ENCODE measurements at regions of chr4 and their contacts with region 1.

Region 1: DNA sequence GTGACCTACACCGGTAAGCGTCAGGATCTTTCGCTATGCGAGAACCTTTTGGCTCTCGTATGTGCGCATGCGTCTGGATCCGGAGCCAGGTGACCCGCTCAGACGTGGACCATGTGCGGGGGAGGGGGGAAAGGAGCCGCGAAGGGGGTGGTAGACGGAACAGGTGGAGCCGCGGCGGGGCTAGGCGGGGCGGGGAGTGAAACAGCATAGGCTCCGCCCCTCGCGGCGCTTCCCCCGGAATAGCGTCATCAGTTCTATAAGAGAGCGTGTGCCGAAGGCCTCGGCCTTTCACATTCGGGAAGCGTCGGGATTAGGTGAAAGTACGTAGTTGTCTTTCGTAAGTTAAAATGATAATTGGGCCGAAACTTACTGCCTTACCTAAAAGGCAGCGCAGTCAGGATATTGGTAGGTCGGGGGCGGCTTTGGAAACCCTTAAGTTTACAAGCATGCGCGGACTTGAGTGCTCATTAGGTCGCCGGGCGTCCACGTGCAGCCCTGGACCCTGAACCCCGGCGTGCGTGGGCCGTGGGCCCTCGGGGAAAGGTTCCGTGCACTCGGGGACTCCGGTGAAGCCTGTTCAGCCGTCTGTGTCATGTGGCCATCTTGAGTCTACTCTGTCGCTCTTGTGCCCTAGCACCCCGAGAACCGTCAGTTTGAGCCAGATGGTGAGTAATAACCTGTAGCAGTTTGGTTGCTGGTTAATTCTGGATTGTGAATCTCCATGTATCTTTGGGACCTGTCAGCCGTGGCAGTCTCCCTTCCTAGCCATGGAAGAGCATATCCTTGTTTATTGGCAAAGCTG is 74.1 kb downstream of the PRSS12 start:
- DNase-seq: peak; percentile 95
- H3K4me3 ChIP-seq: peak overlapping the region; percentile 81 to 99 (median 85)
- H3K27ac ChIP-seq: peak overlapping the region; percentile 94
- H3K4me1 ChIP-seq: peaks cover 20% of the 10 kb centered on the region
- H3K27me3 ChIP-seq: no peaks in the 10 kb centered on the region
- CTCF ChIP-seq: no peak

Region 2: DNA sequence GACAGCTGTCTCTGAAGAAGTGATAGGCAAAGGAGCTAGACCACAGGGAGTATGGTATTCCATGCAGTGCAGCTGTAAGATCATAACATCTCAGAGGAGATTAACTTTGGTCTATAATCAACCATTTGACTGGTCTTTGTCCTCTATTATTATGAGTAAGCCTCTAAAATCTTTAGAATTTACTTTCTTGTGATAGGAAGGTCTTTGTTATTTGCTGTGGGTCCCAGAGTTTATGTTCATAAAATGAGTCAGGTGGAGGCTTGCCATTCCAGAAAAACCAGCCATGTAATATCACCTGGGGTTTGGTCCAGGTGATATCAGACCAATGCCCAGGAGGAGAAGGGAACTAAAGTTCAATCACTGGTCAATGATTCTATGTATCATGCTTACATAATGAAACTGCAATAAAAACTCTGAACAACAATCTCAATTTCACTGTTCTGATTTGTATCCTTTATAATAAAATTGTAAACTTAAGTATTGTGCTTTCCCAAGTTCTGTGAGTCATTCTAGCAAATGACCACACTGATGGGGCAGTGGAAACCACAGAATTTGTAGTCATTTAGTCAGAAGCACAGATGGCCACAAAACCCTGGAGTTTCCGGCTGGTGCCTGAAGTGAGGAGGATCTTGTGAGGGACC is 953.7 kb before region 1 on chr4:
- CTCF ChIA-PET with region 1: no interaction called
- dilution Hi-C with region 1: no loop called
- in situ Hi-C with region 1: no loop called
- intact Hi-C with region 1: loop called (anchors 1 kb)
- DNase-seq: peak; percentile 98
- H3K4me3 ChIP-seq: peak overlapping the region in 2 of 3 experiments; percentile 62 to 80
- H3K27ac ChIP-seq: peak overlapping the region; percentile 98
- H3K4me1 ChIP-seq: peaks cover 12% of the 10 kb centered on the region
- H3K27me3 ChIP-seq: no peaks in the 10 kb centered on the region
- CTCF ChIP-seq: no peak

Region 3: DNA sequence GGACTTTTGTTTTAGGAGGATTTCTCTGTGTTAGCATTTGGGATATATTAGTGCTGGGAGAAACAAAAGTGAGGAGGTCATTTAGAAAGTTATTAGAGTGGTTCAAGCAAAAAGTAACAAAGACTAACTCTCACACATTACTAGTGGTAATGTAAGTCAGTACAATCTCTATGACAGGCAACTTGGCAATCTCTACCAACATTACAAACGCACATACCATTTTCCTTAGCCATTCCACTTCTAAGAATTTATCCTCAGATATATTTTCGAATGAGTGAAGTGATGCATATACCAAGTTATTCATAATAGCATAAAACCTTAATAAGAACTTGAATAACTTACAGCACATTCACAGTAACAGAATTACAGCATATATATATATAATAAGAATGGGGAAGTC is 72.0 kb before region 1 on chr4:
- CTCF ChIA-PET with region 1: no interaction called
- dilution Hi-C with region 1: no loop called
- in situ Hi-C with region 1: no loop called
- intact Hi-C with region 1: no loop called
- DNase-seq: no peak
- H3K4me3 ChIP-seq: no peak overlapping the region
- H3K27ac ChIP-seq: no peak overlapping the region
- H3K4me1 ChIP-seq: no peaks in the 10 kb centered on the region
- H3K27me3 ChIP-seq: no peaks in the 10 kb centered on the region
- CTCF ChIP-seq: no peak

Region 4: GRCh38 chr4:118352843-118353533 is 74.3 kb after region 1 on chr4 and contains the start of gene PRSS12:
- CTCF ChIA-PET with region 1: interaction called, 3 read pairs
- dilution Hi-C with region 1: no loop called
- in situ Hi-C with region 1: loop called in 1 of 2 experiments (anchors 10 kb)
- intact Hi-C with region 1: loop called (anchors 1 kb)
- DNase-seq: peak; percentile 82
- H3K4me3 ChIP-seq: peak within 1 kb of the TSS; percentile 73 to 87 (median 76)
- H3K27ac ChIP-seq: peak within 1 kb of the TSS; percentile 41
- H3K4me1 ChIP-seq: peaks cover 11% of the 10 kb centered on the region
- H3K27me3 ChIP-seq: no peaks in the 10 kb centered on the region
- CTCF ChIP-seq: peak; percentile 59 to 85
- total RNA-seq, gene PRSS12: 33.0 to 70.8 TPM

Region 5: DNA sequence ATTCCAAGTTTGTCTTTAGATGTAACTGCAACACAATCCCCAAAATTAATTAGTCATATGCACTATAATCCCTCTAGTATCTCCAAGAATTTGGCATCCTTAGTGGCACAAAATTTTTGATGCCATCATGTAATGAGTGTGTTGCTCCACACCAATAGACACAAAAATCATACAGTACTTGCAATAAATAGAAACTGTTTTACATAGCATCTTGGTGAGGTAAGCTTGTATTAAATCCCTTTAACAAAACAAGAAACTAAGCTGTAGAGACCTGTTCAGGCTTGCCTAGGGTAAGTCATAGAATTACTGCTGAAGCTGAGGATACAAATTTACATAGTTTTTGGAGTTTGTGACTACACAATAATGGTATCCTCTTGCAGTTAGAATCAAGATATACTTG is 138.7 kb after region 1 on chr4:
- CTCF ChIA-PET with region 1: no interaction called
- dilution Hi-C with region 1: no loop called
- in situ Hi-C with region 1: no loop called
- intact Hi-C with region 1: loop called (anchors 2 kb)
- DNase-seq: peak; percentile 93
- H3K4me3 ChIP-seq: no peak overlapping the region
- H3K27ac ChIP-seq: peak overlapping the region; percentile 66
- H3K4me1 ChIP-seq: peaks cover 4% of the 10 kb centered on the region
- H3K27me3 ChIP-seq: no peaks in the 10 kb centered on the region
- CTCF ChIP-seq: no peak

Measured in mammary epithelial cell (primary cell).